ENCODE measurements at regions of chr7 and their contacts with region 1.

Region 1: DNA sequence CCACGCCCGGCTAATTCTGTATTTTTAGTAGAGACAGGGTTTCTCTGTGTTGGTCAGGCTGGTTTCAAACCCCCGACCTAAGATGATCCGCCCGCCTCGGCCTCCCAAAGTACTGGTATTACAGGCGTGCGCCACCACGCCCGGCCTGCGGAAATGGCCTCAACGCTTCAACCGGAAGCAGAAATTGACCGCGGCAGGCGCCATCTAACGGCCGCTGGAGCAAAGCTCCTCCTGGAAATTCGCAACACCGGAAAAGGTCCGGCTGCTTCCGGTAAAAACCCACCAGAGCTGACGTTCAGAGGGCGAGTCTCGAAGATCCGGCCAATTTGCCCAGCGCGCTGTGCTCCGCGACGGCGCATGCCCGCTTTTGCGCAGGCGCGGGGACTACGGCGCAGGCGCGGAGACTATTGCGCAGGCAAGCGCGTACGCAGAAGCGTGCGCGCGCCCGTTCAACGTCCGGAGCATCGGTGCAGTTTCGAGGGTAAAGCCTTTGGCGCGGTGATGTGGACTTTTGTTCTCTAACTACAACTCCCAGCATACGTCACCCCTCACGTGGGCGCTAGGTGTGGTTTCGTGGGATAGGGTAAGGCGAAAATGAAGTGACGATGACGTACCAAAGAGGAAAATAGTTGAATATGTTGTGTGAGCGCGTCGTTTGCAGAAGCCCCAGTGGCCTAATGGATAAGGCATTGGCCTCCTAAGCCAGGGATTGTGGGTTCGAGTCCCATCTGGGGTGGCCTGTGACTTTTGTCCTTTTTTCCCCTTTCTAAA is 915 bp upstream of the FMC1 start:
- DNase-seq: peak; percentile 100
- H3K4me3 Mint-ChIP-seq: peak overlapping the region; percentile 94
- H3K27ac Mint-ChIP-seq: peak overlapping the region; percentile 99
- H3K4me1 Mint-ChIP-seq: peaks cover 6% of the 10 kb centered on the region
- H3K27me3 Mint-ChIP-seq: no peaks in the 10 kb centered on the region
- CTCF ChIP-seq: peak; percentile 59

Region 2: GRCh38 chr7:139109188-139109982 is 230.8 kb before region 1 on chr7 and contains the start of gene ZC3HAV1:
- CTCF ChIA-PET with region 1: interaction called, 3 read pairs
- POLR2A ChIA-PET with region 1: no interaction called
- intact Hi-C with region 1: loop called (anchors 10 kb)
- DNase-seq: peak; percentile 83
- H3K4me3 Mint-ChIP-seq: peak within 1 kb of the TSS; percentile 95
- H3K27ac Mint-ChIP-seq: peak within 1 kb of the TSS; percentile 91
- H3K4me1 Mint-ChIP-seq: peaks cover 33% of the 10 kb centered on the region
- H3K27me3 Mint-ChIP-seq: no peaks in the 10 kb centered on the region
- CTCF ChIP-seq: no peak
- total RNA-seq, gene ZC3HAV1: 14.2 and 25.7 TPM in 2 replicates

Region 3: GRCh38 chr7:139133335-139134139 is 206.7 kb before region 1 on chr7:
- CTCF ChIA-PET with region 1: no interaction called
- POLR2A ChIA-PET with region 1: interaction called, 10 read pairs
- intact Hi-C with region 1: no loop called
- DNase-seq: peak; percentile 86
- H3K4me3 Mint-ChIP-seq: peak overlapping the region; percentile 79
- H3K27ac Mint-ChIP-seq: peak overlapping the region; percentile 88
- H3K4me1 Mint-ChIP-seq: no peaks in the 10 kb centered on the region
- H3K27me3 Mint-ChIP-seq: peaks cover 4% of the 10 kb centered on the region
- CTCF ChIP-seq: no peak

Region 4: GRCh38 chr7:139242741-139243281 is 97.4 kb before region 1 on chr7:
- CTCF ChIA-PET with region 1: interaction called, 8 read pairs
- POLR2A ChIA-PET with region 1: interaction called, 16 read pairs
- intact Hi-C with region 1: no loop called
- DNase-seq: peak; percentile 49
- H3K4me3 Mint-ChIP-seq: no peak overlapping the region
- H3K27ac Mint-ChIP-seq: peak overlapping the region; percentile 82
- H3K4me1 Mint-ChIP-seq: peaks cover 36% of the 10 kb centered on the region
- H3K27me3 Mint-ChIP-seq: no peaks in the 10 kb centered on the region
- CTCF ChIP-seq: no peak

Region 5: GRCh38 chr7:139328375-139328774 is 11.8 kb before region 1 on chr7:
- CTCF ChIA-PET with region 1: interaction called, 4 read pairs
- POLR2A ChIA-PET with region 1: interaction called, 12 read pairs
- intact Hi-C with region 1: no loop called
- DNase-seq: peak; percentile 87
- H3K4me3 Mint-ChIP-seq: no peak overlapping the region
- H3K27ac Mint-ChIP-seq: no peak overlapping the region
- H3K4me1 Mint-ChIP-seq: no peaks in the 10 kb centered on the region
- H3K27me3 Mint-ChIP-seq: no peaks in the 10 kb centered on the region
- CTCF ChIP-seq: no peak

Region 6: GRCh38 chr7:139359366-139360209 is 19.4 kb after region 1 on chr7 and contains the start of gene LUC7L2:
- CTCF ChIA-PET with region 1: interaction called, 3 read pairs
- POLR2A ChIA-PET with region 1: interaction called, 53 read pairs
- intact Hi-C with region 1: loop called (anchors 1 kb)
- DNase-seq: peak; percentile 98
- H3K4me3 Mint-ChIP-seq: peak within 1 kb of the TSS; percentile 99
- H3K27ac Mint-ChIP-seq: peak within 1 kb of the TSS; percentile 96
- H3K4me1 Mint-ChIP-seq: peaks cover 29% of the 10 kb centered on the region
- H3K27me3 Mint-ChIP-seq: no peaks in the 10 kb centered on the region
- CTCF ChIP-seq: no peak
- total RNA-seq, gene LUC7L2: 138 and 145 TPM in 2 replicates

Measured in MCF 10A (cell line).